PC-9 (cell line): ENCODE measurements at regions of chr19 and their contacts with region 1.

Region 1: DNA sequence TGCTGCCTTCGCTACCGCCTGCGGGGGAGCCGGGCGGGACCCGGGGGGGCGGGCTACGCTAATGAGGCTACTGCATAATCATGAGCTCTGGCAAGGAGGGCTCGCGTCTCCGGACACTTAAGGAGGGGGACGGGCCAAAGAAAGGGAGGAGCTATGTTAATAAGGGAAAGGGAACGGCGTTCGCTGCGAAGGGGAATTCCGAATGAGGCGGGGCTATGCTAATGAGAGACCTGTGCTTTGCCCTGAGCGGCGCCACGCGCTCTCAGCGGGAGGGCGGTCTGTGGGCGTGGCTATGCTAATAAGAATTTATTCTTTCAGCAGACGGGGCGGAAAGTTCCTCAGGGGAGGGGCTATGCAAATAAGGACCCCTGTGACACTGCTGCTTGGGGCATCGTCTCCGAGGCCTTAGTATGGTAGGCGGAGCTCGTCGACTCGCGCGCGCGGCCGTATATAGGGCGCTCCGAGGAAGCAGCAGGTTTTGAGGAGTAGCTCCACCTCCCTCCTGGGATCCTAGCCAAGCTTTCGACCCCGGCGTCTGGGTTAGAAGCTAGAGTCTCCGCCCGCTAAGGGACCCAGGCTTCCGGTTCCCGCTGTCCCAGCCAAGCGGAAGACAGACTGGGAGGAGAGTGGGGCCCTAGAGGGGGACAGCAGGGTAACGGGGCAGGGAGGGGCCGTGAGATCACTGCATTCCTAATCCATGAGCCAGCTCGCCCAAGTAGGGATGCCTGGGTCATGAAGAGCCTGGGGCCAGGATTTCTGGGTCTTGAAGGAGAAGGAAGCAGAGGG is at the start of gene RRAS:
- DNase-seq: peak; percentile 99
- H3K4me3 ChIP-seq: peak within 1 kb of the TSS; percentile 80
- H3K27ac ChIP-seq: peak within 1 kb of the TSS; percentile 100
- H3K4me1 ChIP-seq: peaks cover 37% of the 10 kb centered on the region
- H3K27me3 ChIP-seq: no peaks in the 10 kb centered on the region
- CTCF ChIP-seq: no peak
- total RNA-seq, gene RRAS: 36.6 and 40.6 TPM in 2 replicates

Region 2: GRCh38 chr19:48872182-48872883 is 768.0 kb before region 1 on chr19 and contains the start of gene PPP1R15A:
- CTCF ChIA-PET with region 1: no interaction called
- POLR2A ChIA-PET with region 1: interaction called, 4 read pairs
- intact Hi-C with region 1: loop called (anchors 5 kb)
- DNase-seq: peak; percentile 95 to 98
- H3K4me3 ChIP-seq: peak within 1 kb of the TSS; percentile 93
- H3K27ac ChIP-seq: peak within 1 kb of the TSS; percentile 97
- H3K4me1 ChIP-seq: peaks cover 22% of the 10 kb centered on the region
- H3K27me3 ChIP-seq: peaks cover 2% of the 10 kb centered on the region; the same call in 1 of the 2 replicates
- CTCF ChIP-seq: peak; percentile 39; the same call in 1 of the 2 replicates
- total RNA-seq, gene PPP1R15A: 49.5 and 53.6 TPM in 2 replicates

Region 3: GRCh38 chr19:49297403-49297802 is 342.9 kb before region 1 on chr19:
- CTCF ChIA-PET with region 1: no interaction called
- POLR2A ChIA-PET with region 1: no interaction called
- intact Hi-C with region 1: no loop called
- DNase-seq: no peak
- H3K4me3 ChIP-seq: no peak overlapping the region
- H3K27ac ChIP-seq: no peak overlapping the region
- H3K4me1 ChIP-seq: no peaks in the 10 kb centered on the region
- H3K27me3 ChIP-seq: peaks cover 79% of the 10 kb centered on the region
- CTCF ChIP-seq: no peak

Region 4: DNA sequence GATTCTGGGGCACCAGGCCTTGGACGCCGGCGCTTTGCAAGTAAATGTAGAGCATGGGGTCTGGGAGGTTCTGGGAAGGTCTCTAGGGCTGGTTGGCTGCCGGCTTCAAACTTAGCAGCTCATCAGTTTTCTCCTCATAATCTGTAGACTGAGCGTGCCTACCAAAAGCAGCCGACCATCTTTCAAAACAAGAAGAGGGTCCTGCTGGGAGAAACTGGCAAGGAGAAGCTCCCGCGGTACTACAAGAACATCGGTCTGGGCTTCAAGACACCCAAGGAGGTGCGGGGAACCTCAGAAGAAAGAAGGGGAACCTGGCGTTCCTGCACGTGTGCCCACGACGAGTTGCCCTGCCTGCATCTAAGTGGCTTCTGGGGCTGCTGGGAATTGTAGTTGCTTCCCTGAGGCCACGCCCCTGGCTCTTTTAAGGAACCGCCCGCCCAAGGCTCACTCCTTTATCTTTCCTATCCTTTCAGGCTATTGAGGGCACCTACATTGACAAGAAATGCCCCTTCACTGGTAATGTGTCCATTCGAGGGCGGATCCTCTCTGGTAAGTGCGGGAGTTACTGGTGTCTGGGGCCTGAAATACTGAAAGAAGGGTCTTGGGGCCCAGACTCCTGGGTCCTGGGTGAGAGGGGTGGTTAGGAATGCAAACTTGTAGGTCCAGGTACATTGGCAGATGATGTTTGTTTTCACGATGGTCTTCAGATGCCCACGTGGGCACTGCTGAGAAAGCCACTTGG is 143.1 kb before region 1 on chr19:
- CTCF ChIA-PET with region 1: no interaction called
- POLR2A ChIA-PET with region 1: interaction called, 3 read pairs
- intact Hi-C with region 1: loop called (anchors 1 kb)
- DNase-seq: peak; percentile 55 to 61
- H3K4me3 ChIP-seq: peak overlapping the region; percentile 89
- H3K27ac ChIP-seq: peak overlapping the region; percentile 91
- H3K4me1 ChIP-seq: peaks cover 22% of the 10 kb centered on the region
- H3K27me3 ChIP-seq: no peaks in the 10 kb centered on the region
- CTCF ChIP-seq: no peak

Region 5: GRCh38 chr19:49614096-49614833 is 26.0 kb before region 1 on chr19:
- CTCF ChIA-PET with region 1: no interaction called
- POLR2A ChIA-PET with region 1: interaction called, 6 read pairs
- intact Hi-C with region 1: loop called (anchors 2 kb)
- DNase-seq: peak; percentile 50 to 75
- H3K4me3 ChIP-seq: peak overlapping the region; percentile 5; the same call in 1 of the 2 replicates
- H3K27ac ChIP-seq: peak overlapping the region; percentile 84
- H3K4me1 ChIP-seq: peaks cover 33% of the 10 kb centered on the region
- H3K27me3 ChIP-seq: no peaks in the 10 kb centered on the region
- CTCF ChIP-seq: 0 out of 2 replicates have a peak, but pooled peaks have one; percentile 28

Region 6: GRCh38 chr19:49718511-49718910 is 78.2 kb after region 1 on chr19:
- CTCF ChIA-PET with region 1: no interaction called
- POLR2A ChIA-PET with region 1: interaction called, 17 read pairs
- intact Hi-C with region 1: no loop called
- DNase-seq: no peak
- H3K4me3 ChIP-seq: no peak overlapping the region
- H3K27ac ChIP-seq: no peak overlapping the region
- H3K4me1 ChIP-seq: peaks cover 13% of the 10 kb centered on the region
- H3K27me3 ChIP-seq: no peaks in the 10 kb centered on the region
- CTCF ChIP-seq: no peak

Region 7: DNA sequence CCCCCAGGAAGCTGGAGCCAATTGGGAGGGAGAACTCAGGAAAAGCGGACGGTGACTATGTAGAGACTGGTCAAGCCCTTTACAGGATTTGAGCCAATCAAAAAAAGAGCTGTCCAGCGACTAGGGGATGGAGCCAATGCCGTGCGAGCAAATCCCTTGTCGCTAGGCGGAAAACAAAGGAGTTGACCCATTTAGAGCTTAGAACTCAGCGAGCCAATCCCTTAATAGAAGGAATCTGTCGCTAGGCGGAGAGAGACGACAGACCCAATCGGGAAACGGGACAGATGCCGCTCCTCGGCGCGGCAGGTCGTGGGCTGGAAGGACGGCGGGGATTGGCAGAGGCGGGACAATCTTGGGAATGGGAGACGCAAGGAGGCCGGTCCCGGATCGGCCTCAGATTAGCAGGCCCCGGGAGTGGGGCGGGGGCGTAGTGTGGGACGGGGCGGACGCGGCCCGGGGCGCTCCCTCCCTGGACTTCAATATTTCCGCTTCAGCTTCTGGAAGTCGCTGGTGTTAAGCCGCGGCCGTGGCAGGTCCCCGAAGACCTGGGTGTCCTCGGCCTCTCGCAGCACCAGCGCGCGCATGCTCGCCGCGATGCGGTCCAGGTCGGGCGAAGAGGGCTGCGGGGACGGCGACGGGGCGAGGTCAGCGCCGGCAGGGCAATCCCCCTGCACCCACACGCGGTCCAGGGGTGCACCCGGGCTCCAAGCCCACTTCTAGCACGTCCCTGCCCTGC is 229.3 kb after region 1 on chr19:
- CTCF ChIA-PET with region 1: no interaction called
- POLR2A ChIA-PET with region 1: interaction called, 11 read pairs
- intact Hi-C with region 1: no loop called
- DNase-seq: peak; percentile 98 to 99
- H3K4me3 ChIP-seq: peak overlapping the region; percentile 48; the same call in 1 of the 2 replicates
- H3K27ac ChIP-seq: no peak overlapping the region
- H3K4me1 ChIP-seq: peaks cover 36% of the 10 kb centered on the region
- H3K27me3 ChIP-seq: no peaks in the 10 kb centered on the region
- CTCF ChIP-seq: no peak

Region 8: DNA sequence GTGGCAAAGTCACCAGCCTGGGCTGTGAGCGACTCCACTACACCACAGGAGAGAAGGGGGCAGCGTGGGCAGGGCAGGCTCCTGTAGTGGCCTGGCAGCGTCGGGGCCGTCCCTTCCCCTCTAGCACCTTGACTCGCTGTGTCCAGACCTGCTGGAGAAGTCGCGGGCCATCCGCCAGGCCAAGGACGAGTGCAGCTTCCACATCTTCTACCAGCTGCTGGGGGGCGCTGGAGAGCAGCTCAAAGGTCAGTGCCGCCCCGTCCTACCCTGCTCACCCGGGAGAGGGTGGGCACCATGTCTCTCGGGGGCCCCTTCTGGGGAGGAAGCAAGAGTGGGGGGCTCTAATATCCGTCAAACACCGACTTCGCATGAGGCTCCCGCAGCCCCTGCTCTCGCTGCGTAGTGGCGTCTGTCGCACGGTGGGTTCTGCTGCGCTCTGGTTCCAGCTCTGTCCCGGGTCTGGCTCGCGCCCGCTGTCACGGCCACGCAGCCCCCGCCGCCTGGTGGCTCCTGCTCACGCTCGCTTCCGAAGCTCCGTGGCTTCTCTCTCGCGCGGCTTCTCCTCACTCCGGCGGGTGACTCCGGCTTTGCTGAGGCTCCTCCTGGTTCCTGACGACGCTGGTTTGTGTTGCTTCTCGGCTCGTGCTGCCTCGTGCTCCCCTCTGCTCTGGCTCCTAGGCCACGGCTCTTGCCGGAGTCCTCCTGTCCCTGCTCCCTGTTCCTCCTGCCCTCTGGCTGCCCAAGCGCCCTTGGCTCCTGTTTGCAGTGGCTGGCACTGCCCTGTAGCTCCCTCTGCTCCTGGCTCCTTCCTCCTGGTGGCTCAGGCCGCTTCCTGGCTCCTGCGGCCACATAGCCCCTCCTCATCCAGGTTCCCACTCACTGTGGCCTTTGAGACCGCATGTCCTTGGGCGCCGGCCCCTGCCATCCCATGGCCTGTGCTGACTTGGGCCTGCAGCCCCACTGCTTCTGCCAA is 590.4 kb after region 1 on chr19:
- CTCF ChIA-PET with region 1: no interaction called
- POLR2A ChIA-PET with region 1: no interaction called
- intact Hi-C with region 1: no loop called
- DNase-seq: no peak
- H3K4me3 ChIP-seq: no peak overlapping the region
- H3K27ac ChIP-seq: no peak overlapping the region
- H3K4me1 ChIP-seq: no peaks in the 10 kb centered on the region
- H3K27me3 ChIP-seq: no peaks in the 10 kb centered on the region
- CTCF ChIP-seq: no peak; the same call in 1 of the 2 replicates